ENCODE measurements at regions of chr17 and their contacts with region 1.

Region 1: GRCh38 chr17:57009737-57010445 is 32.0 kb downstream of the SCPEP1 start:
- DNase-seq: peak; percentile 25
- H3K4me3 ChIP-seq: no peak overlapping the region
- H3K27ac ChIP-seq: no peak overlapping the region
- H3K4me1 ChIP-seq: peaks cover 8% of the 10 kb centered on the region
- H3K27me3 ChIP-seq: no peaks in the 10 kb centered on the region
- CTCF ChIP-seq: peak; percentile 72

Region 2: DNA sequence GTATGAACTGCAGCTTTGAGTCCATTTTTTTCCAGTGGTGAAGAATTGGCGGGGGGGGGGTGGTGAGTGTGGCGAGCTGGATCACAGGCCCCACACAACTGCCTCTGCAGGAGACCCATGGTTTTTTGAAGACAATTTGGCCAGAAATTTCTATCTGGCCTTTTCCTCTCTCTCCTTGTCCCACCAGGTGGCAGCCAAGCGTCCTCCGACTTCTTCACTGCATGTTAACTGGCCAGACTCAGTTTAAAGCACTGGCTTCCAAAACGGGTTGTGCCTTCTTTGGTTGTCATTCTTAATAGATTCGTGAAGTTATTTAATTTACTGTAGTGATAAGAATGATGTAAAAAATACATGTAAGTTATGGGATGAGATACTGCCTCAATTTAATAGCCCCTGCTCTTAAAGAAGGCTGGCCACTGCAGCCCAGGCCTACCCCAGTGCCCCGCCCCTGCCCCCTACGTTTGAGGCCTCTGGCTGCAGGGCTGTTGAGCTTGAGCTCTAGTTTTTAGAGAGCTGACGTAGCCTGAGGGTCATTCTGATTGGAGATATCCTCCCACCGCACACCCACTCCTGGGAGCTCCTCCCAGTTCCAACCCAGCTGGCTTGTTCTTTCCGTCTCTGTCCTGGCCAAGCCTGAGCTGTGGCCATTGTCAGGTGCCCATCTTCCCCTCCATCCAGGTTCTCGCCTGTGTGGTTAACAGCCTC is 111.6 kb after region 1 on chr17:
- intact Hi-C with region 1: loop called (anchors 5 kb)
- DNase-seq: no peak
- H3K4me3 ChIP-seq: no peak overlapping the region
- H3K27ac ChIP-seq: no peak overlapping the region
- H3K4me1 ChIP-seq: peaks cover 19% of the 10 kb centered on the region
- H3K27me3 ChIP-seq: no peaks in the 10 kb centered on the region
- CTCF ChIP-seq: peak; percentile 56